IMR-90 (cell line): ENCODE measurements at regions of chr6 and their contacts with region 1.

Region 1: DNA sequence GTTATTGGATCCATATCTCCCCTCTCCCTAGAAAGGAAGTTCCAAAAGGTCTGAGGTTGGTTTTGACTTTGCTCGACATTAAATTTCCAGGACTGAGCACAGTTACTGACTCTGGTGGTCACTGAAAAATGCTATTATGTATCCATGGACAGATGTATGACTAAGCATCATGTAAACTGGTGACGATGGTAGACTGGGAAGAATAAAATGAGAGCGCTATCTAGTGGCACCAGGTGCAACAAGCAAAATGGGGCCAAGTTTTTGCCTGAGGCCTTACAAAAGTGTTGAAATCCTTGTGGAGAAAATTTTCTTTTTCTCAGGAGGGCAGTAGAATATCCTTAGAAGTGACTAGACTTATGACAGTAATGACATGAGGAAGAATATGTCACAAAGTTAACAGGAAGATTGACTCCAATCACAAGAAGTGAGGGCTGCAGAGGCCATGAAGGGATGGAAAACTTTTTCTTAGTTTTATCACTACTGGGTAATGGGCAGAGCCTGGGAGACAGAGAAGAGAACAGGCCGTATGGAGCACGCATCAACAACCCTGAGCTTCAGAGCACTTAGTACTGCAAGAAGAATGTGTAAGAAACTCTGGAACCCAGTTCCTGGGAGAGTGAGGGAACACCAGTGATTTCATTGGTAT is 88.9 kb upstream of the ELOVL5 start:
- DNase-seq: peak; percentile 91
- ATAC-seq: peak; percentile 90
- H3K4me3 ChIP-seq: no peak overlapping the region
- H3K27ac ChIP-seq: no peak overlapping the region
- H3K4me1 ChIP-seq: peaks cover 10% of the 10 kb centered on the region
- H3K27me3 ChIP-seq: no peaks in the 10 kb centered on the region
- CTCF ChIP-seq: peak; percentile 93
- POLR2A ChIP-seq: no peak
- RAD21 ChIP-seq: peak; percentile 83

Region 2: DNA sequence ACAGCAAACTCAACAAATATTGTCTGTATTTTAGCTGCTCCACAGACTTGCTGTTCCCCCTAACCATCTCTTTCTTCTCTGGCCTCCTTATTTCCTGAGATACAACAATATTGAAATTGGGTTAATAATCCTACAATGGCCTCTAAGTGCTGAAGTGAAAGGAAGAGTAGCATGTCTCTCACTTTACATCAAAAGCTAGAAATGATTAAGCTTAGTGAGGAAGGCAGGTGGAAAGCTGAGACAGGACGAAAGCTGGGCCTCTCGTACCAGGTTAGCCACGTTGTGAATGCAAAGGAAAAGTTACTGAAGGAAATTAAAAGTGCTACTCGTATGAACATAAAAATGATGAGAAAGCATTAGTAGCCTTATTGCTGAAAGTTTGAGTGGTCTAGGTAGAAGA is 152.8 kb before region 1 on chr6:
- CTCF ChIA-PET with region 1: no interaction called
- POLR2A ChIA-PET with region 1: no interaction called
- dilution Hi-C with region 1: no loop called
- in situ Hi-C with region 1: no loop called
- intact Hi-C with region 1: loop called (anchors 10 kb)
- DNase-seq: no peak
- ATAC-seq: no peak
- H3K4me3 ChIP-seq: no peak overlapping the region
- H3K27ac ChIP-seq: no peak overlapping the region
- H3K4me1 ChIP-seq: no peaks in the 10 kb centered on the region; the same call in 1 of the 2 replicates
- H3K27me3 ChIP-seq: no peaks in the 10 kb centered on the region
- CTCF ChIP-seq: no peak
- POLR2A ChIP-seq: no peak
- RAD21 ChIP-seq: no peak

Region 3: DNA sequence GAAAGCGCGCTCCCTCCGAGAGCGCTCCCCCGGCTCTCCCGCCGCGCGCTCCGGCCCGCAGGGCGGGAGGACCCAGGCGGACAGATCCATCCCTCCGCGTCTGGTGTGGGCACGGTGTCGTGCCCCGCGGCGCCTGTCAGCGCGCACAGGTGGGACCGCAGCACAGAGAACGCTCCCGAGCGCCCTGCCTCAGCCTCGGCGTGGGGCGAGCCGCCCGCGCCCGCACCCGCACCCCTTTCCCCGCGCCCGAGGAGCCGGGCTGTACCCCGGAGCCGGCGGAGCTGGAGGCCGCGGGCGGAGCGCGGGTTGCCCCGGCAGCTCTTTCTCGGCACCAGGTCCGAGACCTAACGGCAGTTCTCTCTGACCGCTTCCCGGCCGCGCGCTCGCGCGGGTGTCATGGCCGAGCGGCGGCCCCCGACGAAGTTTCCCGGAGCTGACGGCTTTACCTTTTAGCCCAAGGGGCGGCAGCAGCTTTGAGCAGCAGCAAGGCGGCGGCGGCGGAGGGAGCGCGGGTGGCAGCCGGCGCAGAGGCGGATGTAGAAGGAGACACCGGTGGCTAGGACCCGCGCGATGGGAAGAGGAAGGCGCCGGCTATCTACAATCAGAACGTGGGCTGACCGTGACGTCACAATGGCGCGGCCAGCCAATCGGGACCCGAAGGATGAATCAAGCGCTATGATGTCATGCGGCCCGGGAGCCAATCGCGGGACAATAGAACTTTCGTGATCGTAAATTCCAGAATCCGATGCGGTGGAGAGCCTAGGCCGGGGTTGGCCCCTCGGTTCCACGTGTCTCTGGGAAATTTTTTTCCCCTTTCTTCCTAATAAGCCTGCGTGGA is 89.1 kb before region 1 on chr6 and contains the start of gene ELOVL5:
- CTCF ChIA-PET with region 1: no interaction called
- POLR2A ChIA-PET with region 1: no interaction called
- dilution Hi-C with region 1: no loop called
- in situ Hi-C with region 1: no loop called
- intact Hi-C with region 1: loop called (anchors 5 kb)
- DNase-seq: peak; percentile 98
- ATAC-seq: peak; percentile 65
- H3K4me3 ChIP-seq: peak within 1 kb of the TSS; percentile 95
- H3K27ac ChIP-seq: peak within 1 kb of the TSS; percentile 91
- H3K4me1 ChIP-seq: 0 out of 2 replicates have a peak, but pooled peaks cover 1% of the 10 kb centered on the region
- H3K27me3 ChIP-seq: peaks cover 3% of the 10 kb centered on the region; the same call in 1 of the 2 replicates
- CTCF ChIP-seq: no peak
- POLR2A ChIP-seq: peak; percentile 84
- RAD21 ChIP-seq: no peak
- total RNA-seq, gene ELOVL5: 42.3 and 50.5 TPM in 2 replicates